ENCODE measurements at regions of chr3 and their contacts with region 1.

Region 1: GRCh38 chr3:51682079-51682478 is 11.0 kb downstream of the TEX264 start:
- DNase-seq: peak; percentile 90
- CTCF ChIP-seq: peak; percentile 87

Region 2: DNA sequence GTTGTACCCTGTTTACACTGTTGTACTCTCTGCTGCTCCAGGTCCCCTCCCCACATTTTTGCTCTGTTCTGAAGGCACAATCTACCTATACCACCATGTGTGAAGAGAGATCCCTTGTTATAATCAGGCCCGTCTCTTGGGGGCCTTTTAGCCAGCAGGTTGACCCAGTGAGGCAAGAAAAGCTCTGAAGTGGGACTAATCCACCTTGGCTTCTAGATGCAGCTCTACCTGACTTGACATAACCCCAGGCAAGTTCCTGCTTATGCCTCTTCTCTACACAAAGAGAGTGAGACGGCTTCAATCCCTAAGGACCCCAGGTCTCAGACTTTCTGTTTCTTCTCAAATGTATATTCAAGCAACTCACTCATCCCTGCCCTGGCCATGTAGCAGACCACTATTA is 353.9 kb before region 1 on chr3:
- in situ Hi-C with region 1: no loop called
- DNase-seq: no peak
- CTCF ChIP-seq: no peak

Region 3: GRCh38 chr3:51501833-51502561 is 180.1 kb before region 1 on chr3:
- in situ Hi-C with region 1: loop called (anchors 5 kb)
- DNase-seq: peak; percentile 69
- CTCF ChIP-seq: peak; percentile 96

Measured in GM13976 (cell line).